ENCODE measurements at regions of chr3 and their contacts with region 1.

Region 1: DNA sequence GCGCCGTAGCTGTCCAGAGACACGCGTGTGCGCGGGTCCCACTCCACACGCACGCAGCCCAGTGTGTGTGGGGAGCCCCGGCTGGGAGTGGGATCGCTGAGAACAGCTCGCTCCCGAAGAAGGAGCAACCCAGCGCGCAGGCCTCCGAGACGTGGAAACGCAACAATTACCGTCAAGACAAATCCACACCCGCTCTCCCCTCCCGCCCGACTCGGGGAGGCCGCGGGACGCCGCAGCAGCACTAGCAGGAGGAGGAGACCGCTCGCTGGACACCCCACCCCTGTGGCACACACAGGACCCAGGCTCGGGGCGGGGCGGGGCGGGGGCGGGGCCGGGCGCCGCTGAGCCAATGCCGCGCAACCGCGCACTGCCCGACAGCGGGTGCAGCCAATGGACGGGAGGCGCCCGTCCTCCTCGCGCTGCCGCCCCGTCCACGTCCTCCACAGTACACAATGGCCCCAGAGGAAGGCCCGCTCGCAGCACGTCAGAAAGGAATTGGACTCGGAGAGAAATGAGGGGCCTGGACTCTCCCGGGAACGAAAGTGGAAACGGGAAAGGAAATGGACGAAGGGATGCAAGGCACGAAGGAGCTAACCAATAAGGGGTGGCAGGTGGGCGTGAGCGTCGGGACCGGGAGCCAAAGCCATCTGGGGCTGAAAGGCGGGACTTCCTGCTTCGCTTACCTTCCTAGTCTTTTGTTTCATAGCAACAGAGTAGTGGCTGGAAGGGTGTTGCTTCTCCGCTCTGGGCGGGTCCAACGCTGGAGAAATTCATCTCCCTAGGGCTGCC is at the start of gene CBLB:
- DNase-seq: peak; percentile 93 to 97 (median 97)
- ATAC-seq: peak; percentile 98
- H3K4me3 ChIP-seq: peak within 1 kb of the TSS; percentile 64
- H3K27ac ChIP-seq: peak within 1 kb of the TSS; percentile 84
- H3K4me1 ChIP-seq: no peaks in the 10 kb centered on the region
- H3K27me3 ChIP-seq: no peaks in the 10 kb centered on the region
- total RNA-seq, gene CBLB: 36.6 to 45.0 (median 43.0) TPM

Region 2: DNA sequence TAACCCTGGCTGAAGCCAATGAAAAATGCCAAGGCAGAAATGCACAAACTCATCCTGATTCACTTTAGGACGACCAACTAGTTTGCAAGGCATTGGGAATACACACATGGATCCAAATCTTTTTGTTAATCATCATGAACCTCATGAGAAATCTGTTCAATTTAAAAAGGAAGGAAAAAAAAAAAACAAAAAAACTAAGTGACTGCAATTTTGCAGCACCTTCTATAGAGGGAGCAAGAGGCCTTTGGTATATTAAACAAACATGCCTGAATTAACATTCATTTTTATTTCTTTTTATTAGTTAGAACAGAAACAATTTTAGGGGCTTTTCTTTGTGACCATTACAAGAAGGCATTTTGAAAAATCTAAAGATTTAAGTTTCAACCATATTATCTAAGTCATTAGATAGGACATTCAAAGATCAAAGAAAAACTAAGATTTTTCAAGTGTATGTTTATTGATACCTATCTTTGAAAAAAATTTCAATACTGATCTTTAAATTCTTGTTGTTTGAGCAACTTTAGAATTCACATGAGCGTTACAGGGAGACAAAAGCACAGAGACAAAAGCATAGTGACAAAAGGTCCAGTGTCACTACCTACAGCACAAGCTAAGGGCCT is 182.5 kb before region 1 on chr3:
- intact Hi-C with region 1: loop called in 1 of 4 experiments (anchors 10 kb)
- DNase-seq: no peak
- ATAC-seq: no peak
- H3K4me3 ChIP-seq: no peak overlapping the region
- H3K27ac ChIP-seq: no peak overlapping the region
- H3K4me1 ChIP-seq: no peaks in the 10 kb centered on the region
- H3K27me3 ChIP-seq: no peaks in the 10 kb centered on the region

Region 3: GRCh38 chr3:105700575-105700974 is 168.4 kb before region 1 on chr3:
- intact Hi-C with region 1: loop called in 1 of 4 experiments (anchors 10 kb)
- DNase-seq: no peak
- ATAC-seq: no peak
- H3K4me3 ChIP-seq: no peak overlapping the region
- H3K27ac ChIP-seq: no peak overlapping the region
- H3K4me1 ChIP-seq: no peaks in the 10 kb centered on the region
- H3K27me3 ChIP-seq: no peaks in the 10 kb centered on the region

Region 4: GRCh38 chr3:105715372-105715771 is 153.6 kb before region 1 on chr3:
- intact Hi-C with region 1: loop called in 1 of 4 experiments (anchors 10 kb)
- DNase-seq: no peak
- ATAC-seq: no peak
- H3K4me3 ChIP-seq: no peak overlapping the region
- H3K27ac ChIP-seq: no peak overlapping the region
- H3K4me1 ChIP-seq: no peaks in the 10 kb centered on the region
- H3K27me3 ChIP-seq: no peaks in the 10 kb centered on the region